Psoas muscle (tissue), 8 donors: ENCODE measurements at regions of chr3 and their contacts with region 1.

Region 1: GRCh38 chr3:191328962-191329653 is at the start of gene CCDC50:
- DNase-seq: peak; percentile 88 to 93
- ATAC-seq: peak; percentile 93 to 96 (median 94)
- H3K4me3 ChIP-seq: peak within 1 kb of the TSS; percentile 94
- H3K27ac ChIP-seq: peak within 1 kb of the TSS; percentile 94
- H3K4me1 ChIP-seq: peaks cover 30% of the 10 kb centered on the region
- H3K27me3 ChIP-seq: no peaks in the 10 kb centered on the region
- CTCF ChIP-seq: no peak
- total RNA-seq, gene CCDC50: 27.6 to 41.5 (median 33.3) TPM

Region 2: DNA sequence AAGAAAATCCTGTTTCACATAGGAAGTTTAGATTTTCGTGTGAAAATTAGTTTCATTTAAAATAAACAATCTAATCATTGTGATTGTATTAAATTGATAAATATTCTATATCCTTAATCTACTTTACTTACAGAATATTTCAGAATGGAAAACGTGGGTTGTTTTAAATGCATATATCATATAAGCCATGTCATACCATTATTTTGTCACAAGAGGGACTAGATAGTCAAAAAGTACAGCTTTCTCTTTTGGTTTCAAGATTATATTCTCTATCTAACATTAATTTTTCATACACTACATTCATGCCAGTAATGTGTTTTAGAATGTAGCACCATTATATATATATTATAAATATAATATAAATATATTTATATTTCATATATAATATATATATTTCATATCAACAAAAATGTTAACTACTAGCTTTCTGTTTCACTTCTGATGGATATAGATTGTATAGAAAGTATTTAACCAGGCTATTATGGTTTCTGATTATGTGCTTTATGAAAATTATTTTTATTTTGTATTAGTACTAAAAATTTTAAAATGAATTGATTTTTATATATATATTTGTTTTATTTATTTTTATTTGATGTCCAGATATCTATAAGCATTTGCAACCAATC is 84.8 kb before region 1 on chr3:
- intact Hi-C with region 1: loop called in 1 of 2 experiments (anchors 5 kb)
- DNase-seq: no peak
- ATAC-seq: no peak
- H3K4me3 ChIP-seq: no peak overlapping the region
- H3K27ac ChIP-seq: no peak overlapping the region
- H3K4me1 ChIP-seq: no peaks in the 10 kb centered on the region
- H3K27me3 ChIP-seq: no peaks in the 10 kb centered on the region
- CTCF ChIP-seq: peak; percentile 44

Region 3: DNA sequence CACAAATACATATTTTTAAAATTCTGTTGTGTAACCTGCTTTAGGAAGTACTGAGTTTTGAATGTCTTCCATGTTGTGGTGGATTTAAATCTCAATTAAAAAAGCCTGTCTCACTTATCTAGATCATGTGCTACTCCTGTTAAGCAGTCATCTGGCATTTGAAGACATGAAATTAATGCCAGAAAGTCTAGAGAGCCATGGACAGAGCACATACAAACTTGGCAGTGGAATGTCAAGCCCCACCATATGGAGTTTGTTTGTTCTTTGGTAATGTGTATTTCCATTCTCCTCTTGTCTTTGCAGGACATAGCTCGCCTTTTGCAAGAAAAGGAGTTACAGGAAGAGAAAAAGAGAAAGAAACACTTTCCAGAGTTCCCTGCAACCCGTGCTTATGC is 40.5 kb after region 1 on chr3:
- intact Hi-C with region 1: loop called in 1 of 2 experiments (anchors 5 kb)
- DNase-seq: no peak
- ATAC-seq: no peak
- H3K4me3 ChIP-seq: no peak overlapping the region
- H3K27ac ChIP-seq: no peak overlapping the region
- H3K4me1 ChIP-seq: no peaks in the 10 kb centered on the region
- H3K27me3 ChIP-seq: no peaks in the 10 kb centered on the region
- CTCF ChIP-seq: no peak

Region 4: DNA sequence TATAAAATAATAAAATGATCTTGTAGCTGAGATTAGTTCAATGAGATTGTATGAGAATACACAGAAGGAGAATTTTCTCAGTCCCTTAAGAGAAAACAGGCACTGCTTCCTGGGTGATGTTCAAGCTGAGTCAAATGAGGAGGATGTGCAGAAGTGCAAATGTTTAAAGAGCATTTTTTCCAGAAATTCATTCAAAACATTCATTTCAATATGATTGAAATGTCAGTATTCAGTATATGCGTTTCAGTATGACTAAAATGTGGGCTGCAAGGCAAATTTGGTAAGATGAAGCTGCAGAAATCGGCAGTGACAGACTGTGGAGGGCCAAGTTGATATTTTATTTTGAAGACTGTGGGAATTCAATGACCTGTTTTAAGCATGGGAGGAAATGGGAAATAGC is 112.6 kb after region 1 on chr3:
- intact Hi-C with region 1: no loop called
- DNase-seq: no peak
- ATAC-seq: no peak
- H3K4me3 ChIP-seq: no peak overlapping the region
- H3K27ac ChIP-seq: no peak overlapping the region
- H3K4me1 ChIP-seq: no peaks in the 10 kb centered on the region
- H3K27me3 ChIP-seq: no peaks in the 10 kb centered on the region
- CTCF ChIP-seq: no peak